ENCODE measurements at regions of chr2 and their contacts with region 1.

Region 1: GRCh38 chr2:86035883-86036668 is 69.6 kb downstream of the POLR1A start:
- DNase-seq: peak; percentile 51
- ATAC-seq: peak; percentile 70
- H3K4me3 Mint-ChIP-seq: peak overlapping the region; percentile 70
- H3K27ac Mint-ChIP-seq: peak overlapping the region; percentile 97
- H3K4me1 Mint-ChIP-seq: peaks cover 61% of the 10 kb centered on the region
- H3K27me3 Mint-ChIP-seq: no peaks in the 10 kb centered on the region
- CTCF ChIP-seq: no peak

Region 2: GRCh38 chr2:85826990-85827878 is 208.8 kb before region 1 on chr2:
- CTCF ChIA-PET with region 1: interaction called, 106 read pairs
- POLR2A ChIA-PET with region 1: interaction called, 27 read pairs
- intact Hi-C with region 1: loop called (anchors 1 kb)
- DNase-seq: peak; percentile 77
- ATAC-seq: peak; percentile 99
- H3K4me3 Mint-ChIP-seq: peak overlapping the region; percentile 66
- H3K27ac Mint-ChIP-seq: peak overlapping the region; percentile 62
- H3K4me1 Mint-ChIP-seq: peaks cover 29% of the 10 kb centered on the region
- H3K27me3 Mint-ChIP-seq: peaks cover 2% of the 10 kb centered on the region
- CTCF ChIP-seq: peak; percentile 32

Region 3: DNA sequence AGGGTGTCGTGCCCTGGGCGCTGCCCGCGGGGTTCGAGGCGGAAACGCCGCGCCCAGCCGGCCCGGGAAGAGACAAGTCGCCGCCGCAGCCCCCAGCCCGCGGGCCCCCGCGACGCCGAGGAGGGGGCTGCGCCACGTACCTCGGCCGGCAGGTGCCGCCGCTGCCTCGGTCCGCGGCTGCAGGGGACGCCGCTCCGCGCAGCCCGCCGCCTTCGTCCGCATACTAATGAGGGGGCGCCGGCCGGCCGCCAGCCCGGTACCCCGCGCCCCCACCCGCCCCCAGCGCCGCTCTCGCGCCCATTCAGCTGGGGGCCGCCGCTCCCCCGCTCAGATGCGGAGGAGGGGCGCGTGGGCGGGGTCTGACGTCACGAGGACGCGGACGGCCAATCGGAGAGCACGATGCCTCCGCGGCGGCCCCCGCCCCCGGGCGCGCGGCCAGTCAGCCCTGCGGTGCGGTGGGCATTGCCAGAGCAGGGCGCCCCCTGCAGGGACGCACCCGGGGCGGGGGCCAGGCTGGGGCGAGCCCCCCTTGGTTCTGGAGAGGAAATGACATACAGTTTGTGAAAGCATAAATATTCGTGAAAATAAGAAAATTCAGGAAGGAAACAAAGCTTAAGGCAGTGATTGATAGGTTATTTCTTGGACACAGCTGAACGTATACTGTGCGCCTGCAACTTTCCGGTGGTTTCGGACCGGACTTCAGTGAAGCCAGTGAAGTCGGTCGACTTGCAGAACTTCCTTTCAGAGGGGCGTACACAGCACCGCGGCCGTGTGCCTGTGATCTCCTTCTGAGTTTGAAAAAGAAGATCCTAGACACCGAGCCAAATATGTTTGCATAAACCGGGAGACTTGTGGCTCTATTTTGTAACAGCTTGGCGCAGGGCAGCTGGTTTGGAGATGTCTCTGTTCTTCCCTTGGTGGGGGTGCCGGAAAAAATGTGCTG is 147.1 kb before region 1 on chr2 and contains the start of gene ST3GAL5:
- CTCF ChIA-PET with region 1: interaction called, 90 read pairs
- POLR2A ChIA-PET with region 1: interaction called, 73 read pairs
- intact Hi-C with region 1: loop called (anchors 1 kb)
- DNase-seq: peak; percentile 97
- ATAC-seq: peak; percentile 87
- H3K4me3 Mint-ChIP-seq: peak within 1 kb of the TSS; percentile 97
- H3K27ac Mint-ChIP-seq: peak within 1 kb of the TSS; percentile 96
- H3K4me1 Mint-ChIP-seq: peaks cover 75% of the 10 kb centered on the region
- H3K27me3 Mint-ChIP-seq: no peaks in the 10 kb centered on the region
- CTCF ChIP-seq: peak; percentile 34
- total RNA-seq, gene ST3GAL5: 56.4 and 70.7 TPM in 2 replicates

Region 4: GRCh38 chr2:85999061-85999831 is 36.8 kb before region 1 on chr2:
- CTCF ChIA-PET with region 1: interaction called, 16 read pairs
- POLR2A ChIA-PET with region 1: interaction called, 38 read pairs
- intact Hi-C with region 1: loop called (anchors 1 kb)
- DNase-seq: no peak
- ATAC-seq: peak; percentile 73
- H3K4me3 Mint-ChIP-seq: peak overlapping the region; percentile 66
- H3K27ac Mint-ChIP-seq: peak overlapping the region; percentile 96
- H3K4me1 Mint-ChIP-seq: peaks cover 76% of the 10 kb centered on the region
- H3K27me3 Mint-ChIP-seq: no peaks in the 10 kb centered on the region
- CTCF ChIP-seq: no peak

Region 5: DNA sequence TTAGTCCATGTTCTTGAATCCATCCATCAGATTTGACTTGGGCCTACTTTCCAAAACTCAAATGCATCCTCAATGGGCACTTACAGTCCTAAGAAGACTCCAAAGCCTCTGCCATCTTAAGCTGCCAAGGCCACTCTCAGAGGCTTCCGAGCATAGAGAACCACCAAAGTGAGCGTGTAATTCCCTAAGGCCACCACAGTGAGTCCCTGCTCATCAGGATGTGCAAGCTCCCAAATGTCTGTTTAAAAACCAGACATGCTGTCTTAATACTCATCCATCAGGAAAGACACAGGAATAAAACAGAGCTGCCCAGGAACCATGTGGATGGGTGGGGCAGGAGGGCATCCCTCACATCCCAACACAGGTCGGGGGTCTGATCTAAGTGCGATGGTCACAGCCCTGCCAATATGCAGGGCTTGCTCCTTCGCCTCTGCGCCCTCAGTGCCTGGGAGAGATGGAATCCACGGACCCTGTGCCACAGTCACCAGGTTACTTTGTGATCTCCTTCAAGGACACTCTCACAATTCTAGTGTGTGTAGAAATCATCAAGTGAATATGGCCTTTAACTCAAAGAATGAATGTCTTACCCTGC is 10.8 kb before region 1 on chr2:
- CTCF ChIA-PET with region 1: interaction called, 12 read pairs
- POLR2A ChIA-PET with region 1: interaction called, 11 read pairs
- intact Hi-C with region 1: no loop called
- DNase-seq: no peak
- ATAC-seq: no peak
- H3K4me3 Mint-ChIP-seq: no peak overlapping the region
- H3K27ac Mint-ChIP-seq: no peak overlapping the region
- H3K4me1 Mint-ChIP-seq: peaks cover 15% of the 10 kb centered on the region
- H3K27me3 Mint-ChIP-seq: no peaks in the 10 kb centered on the region
- CTCF ChIP-seq: no peak

Region 6: DNA sequence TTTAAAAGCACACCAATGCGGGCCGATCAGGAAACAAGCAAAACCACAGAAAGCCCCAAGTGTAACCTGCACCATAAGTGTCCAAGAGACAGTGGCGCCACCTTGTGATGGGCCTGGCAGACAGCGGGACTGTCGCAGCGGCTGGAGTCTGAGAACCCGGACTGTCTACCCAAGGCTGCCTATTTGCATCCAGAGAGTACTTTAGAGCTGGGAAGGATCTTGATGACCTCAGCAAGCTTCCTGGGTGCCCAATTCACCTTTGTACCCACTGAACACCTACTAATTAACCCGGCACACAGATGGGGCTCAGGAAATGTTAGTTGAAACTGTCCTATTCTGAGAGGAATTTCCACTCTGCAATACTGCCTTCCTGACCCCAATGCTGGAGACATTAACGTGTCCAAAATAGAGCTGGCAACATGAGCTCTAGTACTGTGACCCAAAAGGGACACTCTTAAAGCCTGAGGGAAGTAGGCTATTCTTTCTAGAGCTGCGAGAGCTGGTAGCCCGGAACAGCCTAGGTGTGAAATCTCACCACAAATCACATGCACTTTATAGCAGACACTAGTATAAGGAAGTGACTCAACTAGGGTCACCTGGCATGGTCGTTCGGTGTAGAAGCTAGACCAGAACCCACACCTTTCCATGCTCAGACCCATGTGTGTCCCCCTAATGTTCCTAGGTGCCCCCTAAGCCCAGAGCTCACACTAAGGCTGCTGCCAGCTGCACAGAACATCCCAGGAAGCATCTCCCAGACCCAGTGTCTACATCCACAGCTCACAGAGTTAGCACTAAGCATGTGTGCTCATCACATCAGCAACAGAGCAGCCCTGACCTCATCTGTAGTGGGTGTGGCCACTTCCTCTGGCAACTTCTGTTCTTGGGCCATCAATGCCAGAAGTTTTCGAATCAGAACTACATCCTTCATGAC is 44.2 kb after region 1 on chr2:
- CTCF ChIA-PET with region 1: interaction called, 64 read pairs
- POLR2A ChIA-PET with region 1: interaction called, 8 read pairs
- intact Hi-C with region 1: loop called (anchors 2 kb)
- DNase-seq: peak; percentile 62
- ATAC-seq: peak; percentile 78
- H3K4me3 Mint-ChIP-seq: peak overlapping the region; percentile 28
- H3K27ac Mint-ChIP-seq: peak overlapping the region; percentile 86
- H3K4me1 Mint-ChIP-seq: peaks cover 35% of the 10 kb centered on the region
- H3K27me3 Mint-ChIP-seq: no peaks in the 10 kb centered on the region
- CTCF ChIP-seq: peak; percentile 40

Measured in activated B cell treated with CpG ODN at 0.5 μM for 24 hours (primary cell).